ENCODE measurements at regions of chr11 and their contacts with region 1.

Region 1: DNA sequence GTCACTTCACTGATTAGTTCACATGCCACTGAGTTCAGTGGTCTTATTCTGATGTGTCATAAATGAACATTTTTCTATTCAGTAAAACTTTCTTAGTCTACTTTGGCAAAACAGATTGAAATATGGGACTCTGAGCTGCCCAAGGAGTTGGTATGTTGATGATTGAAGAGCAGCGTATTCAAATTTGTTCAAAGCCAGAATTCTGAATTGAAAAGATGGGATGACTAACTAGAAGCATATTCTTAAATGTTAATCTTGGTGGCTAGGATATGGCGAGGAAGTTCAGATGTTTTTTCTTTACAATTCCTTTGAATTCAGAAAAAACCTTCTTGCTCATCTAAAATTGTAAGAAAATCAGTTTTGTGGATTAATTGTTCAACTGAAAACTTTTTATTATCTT is 34.7 kb downstream of the KMT2A start:
- DNase-seq: no peak
- H3K4me3 ChIP-seq: no peak overlapping the region
- H3K27ac ChIP-seq: no peak overlapping the region
- H3K4me1 ChIP-seq: no peaks in the 10 kb centered on the region
- H3K27me3 ChIP-seq: no peaks in the 10 kb centered on the region
- CTCF ChIP-seq: no peak

Region 2: DNA sequence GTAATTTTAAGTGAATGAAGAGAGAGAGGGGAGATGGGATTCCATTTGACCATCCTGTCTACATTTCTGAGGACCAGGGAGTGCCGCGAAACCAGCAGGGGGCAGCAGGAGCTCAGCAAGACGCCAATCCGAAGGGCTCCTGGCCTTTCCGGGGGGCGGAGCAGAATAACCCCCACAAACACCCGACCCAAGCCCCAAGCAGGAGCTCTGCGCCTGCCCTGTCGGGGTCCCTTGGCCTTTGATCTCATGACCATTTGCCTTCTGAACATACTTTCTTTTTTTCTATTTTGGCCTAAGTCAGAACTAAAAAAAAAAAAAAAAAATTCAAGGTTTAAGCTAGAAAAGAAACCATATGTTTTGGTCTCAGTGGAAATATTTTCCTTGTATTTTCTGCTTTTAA is 272.7 kb before region 1 on chr11:
- CTCF ChIA-PET with region 1: no interaction called
- POLR2A ChIA-PET with region 1: no interaction called
- intact Hi-C with region 1: no loop called
- DNase-seq: peak in 1 of 2 experiments; percentile 74
- H3K4me3 ChIP-seq: peak overlapping the region; percentile 44; the same call in 1 of the 2 replicates
- H3K27ac ChIP-seq: no peak overlapping the region
- H3K4me1 ChIP-seq: peaks cover 16% of the 10 kb centered on the region
- H3K27me3 ChIP-seq: no peaks in the 10 kb centered on the region
- CTCF ChIP-seq: peak; percentile 98

Region 3: GRCh38 chr11:118514103-118514502 is 43.1 kb after region 1 on chr11:
- CTCF ChIA-PET with region 1: no interaction called
- POLR2A ChIA-PET with region 1: no interaction called
- intact Hi-C with region 1: loop called (anchors 5 kb)
- DNase-seq: no peak
- H3K4me3 ChIP-seq: no peak overlapping the region
- H3K27ac ChIP-seq: no peak overlapping the region
- H3K4me1 ChIP-seq: no peaks in the 10 kb centered on the region
- H3K27me3 ChIP-seq: no peaks in the 10 kb centered on the region
- CTCF ChIP-seq: no peak

Region 4: DNA sequence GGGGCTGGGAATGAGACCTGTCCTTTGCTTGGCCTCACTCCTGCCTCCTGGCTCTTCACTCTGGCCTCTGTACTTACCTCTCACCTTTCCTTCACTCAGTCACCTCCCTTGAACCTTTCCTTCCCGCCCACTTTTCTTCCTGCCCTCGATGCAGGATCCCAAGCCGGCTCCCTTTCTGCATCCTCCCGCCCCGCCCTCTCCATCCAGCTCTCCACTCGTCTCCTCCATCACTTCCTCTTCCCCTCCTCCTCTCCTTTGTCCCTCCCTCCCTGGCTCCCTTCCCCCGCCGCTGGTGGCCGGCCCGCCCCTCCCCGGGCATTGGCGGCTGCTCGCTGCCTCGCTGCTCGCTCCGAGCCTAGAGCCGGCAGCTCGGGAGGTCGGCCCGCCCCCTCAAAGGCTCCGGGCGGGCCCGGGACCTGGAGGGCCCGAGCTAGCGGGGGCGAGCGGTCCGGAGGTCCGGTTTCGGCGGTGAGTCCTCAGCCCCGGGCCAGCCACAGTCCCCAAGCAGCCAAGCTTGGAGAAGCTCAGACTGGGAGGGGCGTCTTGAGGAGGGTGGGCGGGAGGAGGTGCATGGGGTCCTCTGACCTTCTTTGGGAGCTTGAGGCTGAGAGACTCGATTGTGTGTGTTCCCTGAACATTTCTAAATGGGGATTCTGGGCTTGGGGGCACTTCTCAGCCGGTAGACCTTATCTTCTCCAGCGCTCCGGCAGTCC is 150.2 kb after region 1 on chr11:
- CTCF ChIA-PET with region 1: no interaction called
- POLR2A ChIA-PET with region 1: no interaction called
- intact Hi-C with region 1: no loop called
- DNase-seq: peak; percentile 82 to 91
- H3K4me3 ChIP-seq: peak overlapping the region; percentile 67
- H3K27ac ChIP-seq: peak overlapping the region; percentile 79
- H3K4me1 ChIP-seq: peaks cover 62% of the 10 kb centered on the region
- H3K27me3 ChIP-seq: no peaks in the 10 kb centered on the region
- CTCF ChIP-seq: no peak

Measured in PC-9 (cell line).